PC-9 (cell line): ENCODE measurements at regions of chr14 and their contacts with region 1.

Region 1: DNA sequence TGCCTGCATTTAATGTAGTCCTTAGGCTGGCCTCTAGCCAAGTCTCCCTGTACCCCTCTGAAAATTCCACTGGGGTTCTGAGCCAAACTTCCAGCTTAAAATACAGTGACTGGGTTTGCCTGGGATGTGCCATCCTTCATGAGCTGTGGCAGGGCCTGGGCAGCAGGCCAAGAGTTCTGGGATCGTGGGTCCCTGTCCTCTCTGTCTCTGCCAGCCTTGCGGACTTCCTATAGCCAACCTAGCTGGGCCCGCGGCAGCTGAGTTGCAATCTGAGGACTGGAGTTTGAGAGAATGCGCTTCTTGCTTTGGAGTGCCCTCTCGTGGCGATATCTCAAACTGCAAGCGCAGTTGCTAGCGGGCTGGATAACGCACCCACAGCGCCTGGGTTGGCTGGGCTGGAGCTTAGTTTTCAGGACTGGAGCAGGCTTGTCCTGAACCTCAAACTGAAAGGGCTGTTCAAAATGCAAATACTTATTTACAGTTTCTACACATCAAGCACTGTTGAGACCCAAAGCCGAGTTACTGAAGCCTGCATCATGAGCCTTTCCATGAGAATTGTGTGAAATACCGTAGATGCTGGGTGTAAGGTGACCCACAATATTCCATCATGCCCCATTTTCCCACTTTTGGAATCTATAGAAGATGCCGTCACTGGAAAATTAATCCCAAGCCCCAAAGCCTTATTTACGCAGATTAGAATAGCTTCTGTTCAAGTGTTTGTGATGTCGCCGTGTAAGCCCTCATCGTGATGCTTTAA is 7.3 kb upstream of the IFI27L2 start:
- DNase-seq: peak in 1 of 2 experiments; percentile 44
- H3K4me3 ChIP-seq: no peak overlapping the region
- H3K27ac ChIP-seq: no peak overlapping the region
- H3K4me1 ChIP-seq: no peaks in the 10 kb centered on the region
- H3K27me3 ChIP-seq: no peaks in the 10 kb centered on the region
- CTCF ChIP-seq: peak; percentile 84

Region 2: DNA sequence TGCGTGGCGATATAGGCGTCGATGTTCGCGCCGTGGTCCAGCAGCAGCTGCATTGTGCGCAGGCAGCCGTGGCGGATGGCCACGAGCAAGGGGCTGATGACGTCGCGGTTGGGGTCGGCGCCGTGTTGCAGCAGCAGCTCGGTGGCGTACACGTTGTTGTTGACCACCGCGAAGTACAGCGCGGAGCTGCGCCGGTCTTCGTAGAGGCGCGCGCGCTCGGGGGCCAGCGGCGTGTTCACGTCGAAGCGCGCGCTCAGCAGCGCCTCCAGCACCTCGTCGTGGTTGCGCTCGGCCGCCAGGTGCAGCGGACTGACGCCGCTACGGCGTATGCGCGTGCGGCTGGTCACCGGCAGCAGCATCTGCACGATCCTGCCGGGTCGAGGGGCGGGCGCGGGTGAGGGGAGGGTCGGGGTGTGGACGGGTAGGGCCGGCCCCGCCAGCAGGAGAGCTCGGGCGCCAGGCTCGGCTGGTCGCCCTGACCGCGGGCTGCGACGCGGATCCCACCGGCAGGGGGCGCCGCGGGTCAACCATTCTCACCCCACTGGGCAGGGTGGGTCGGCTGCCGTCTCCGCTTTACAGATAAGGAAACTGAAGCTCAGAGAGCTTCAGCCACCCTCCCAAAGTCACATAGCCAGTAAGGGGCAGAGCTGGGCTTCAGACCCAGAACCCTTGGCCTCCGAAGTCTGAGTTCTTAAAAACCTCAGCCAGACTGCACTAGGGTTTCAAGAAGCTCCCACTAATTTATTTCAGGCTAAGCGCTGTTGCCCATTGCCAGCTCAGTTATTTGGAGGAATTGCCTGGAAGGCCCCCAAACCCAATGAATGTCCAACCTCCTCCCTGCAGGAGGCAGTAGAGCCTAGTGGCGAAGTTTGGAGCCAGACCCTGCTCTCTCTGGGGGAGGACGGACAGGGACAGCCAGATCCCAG is 197.2 kb before region 1 on chr14:
- CTCF ChIA-PET with region 1: no interaction called
- POLR2A ChIA-PET with region 1: no interaction called
- intact Hi-C with region 1: loop called (anchors 1 kb)
- DNase-seq: peak in 1 of 2 experiments; percentile 59
- H3K4me3 ChIP-seq: no peak overlapping the region
- H3K27ac ChIP-seq: no peak overlapping the region
- H3K4me1 ChIP-seq: peaks cover 39% of the 10 kb centered on the region
- H3K27me3 ChIP-seq: no peaks in the 10 kb centered on the region
- CTCF ChIP-seq: peak; percentile 76

Region 3: DNA sequence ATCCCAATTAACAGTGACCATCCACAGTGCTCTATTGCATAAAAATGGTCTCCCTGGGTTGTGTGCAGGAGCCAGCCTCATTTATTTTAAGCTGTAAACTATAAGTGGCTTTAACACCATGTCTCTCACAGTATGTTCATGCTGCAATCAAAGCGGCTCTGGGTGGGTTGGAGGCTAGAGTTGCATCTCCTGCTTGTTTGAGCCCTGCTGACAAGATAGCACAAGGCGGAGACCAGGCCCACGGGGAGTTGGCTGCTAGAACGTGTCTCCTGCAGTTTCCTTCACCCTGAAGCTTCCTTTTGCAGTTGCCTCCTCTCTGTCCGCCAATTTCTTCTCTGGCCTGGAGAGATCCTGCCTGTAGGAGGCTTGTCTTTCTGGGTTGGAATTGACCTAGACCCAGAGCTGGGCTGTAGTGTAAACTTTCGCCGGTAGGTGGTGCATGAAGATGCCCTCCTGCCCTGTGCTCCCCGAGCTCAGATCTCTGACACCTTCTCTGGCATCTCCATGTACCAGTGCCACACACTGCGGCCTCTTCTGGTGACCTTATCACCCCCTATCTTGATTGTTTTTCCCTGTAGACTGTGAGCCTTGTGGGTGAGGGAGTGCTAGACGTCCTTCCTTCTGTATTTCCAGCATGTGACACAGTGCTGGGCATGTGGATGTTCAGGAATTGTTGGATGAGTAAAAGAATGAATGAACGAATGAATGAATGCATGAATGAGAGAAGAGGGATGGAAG is 100.3 kb before region 1 on chr14:
- CTCF ChIA-PET with region 1: interaction called, 10 read pairs
- POLR2A ChIA-PET with region 1: interaction called, 5 read pairs
- intact Hi-C with region 1: loop called (anchors 2 kb)
- DNase-seq: peak in 1 of 2 experiments; percentile 32
- H3K4me3 ChIP-seq: no peak overlapping the region
- H3K27ac ChIP-seq: no peak overlapping the region
- H3K4me1 ChIP-seq: no peaks in the 10 kb centered on the region
- H3K27me3 ChIP-seq: no peaks in the 10 kb centered on the region
- CTCF ChIP-seq: peak; percentile 72

Region 4: GRCh38 chr14:94051115-94051514 is 85.6 kb before region 1 on chr14:
- CTCF ChIA-PET with region 1: no interaction called
- POLR2A ChIA-PET with region 1: no interaction called
- intact Hi-C with region 1: loop called (anchors 5 kb)
- DNase-seq: no peak
- H3K4me3 ChIP-seq: no peak overlapping the region
- H3K27ac ChIP-seq: no peak overlapping the region
- H3K4me1 ChIP-seq: no peaks in the 10 kb centered on the region
- H3K27me3 ChIP-seq: no peaks in the 10 kb centered on the region
- CTCF ChIP-seq: no peak

Region 5: GRCh38 chr14:94439453-94440057 is 302.8 kb after region 1 on chr14:
- CTCF ChIA-PET with region 1: no interaction called
- POLR2A ChIA-PET with region 1: no interaction called
- intact Hi-C with region 1: no loop called
- DNase-seq: no peak
- H3K4me3 ChIP-seq: no peak overlapping the region
- H3K27ac ChIP-seq: no peak overlapping the region
- H3K4me1 ChIP-seq: no peaks in the 10 kb centered on the region
- H3K27me3 ChIP-seq: no peaks in the 10 kb centered on the region
- CTCF ChIP-seq: no peak

Region 6: DNA sequence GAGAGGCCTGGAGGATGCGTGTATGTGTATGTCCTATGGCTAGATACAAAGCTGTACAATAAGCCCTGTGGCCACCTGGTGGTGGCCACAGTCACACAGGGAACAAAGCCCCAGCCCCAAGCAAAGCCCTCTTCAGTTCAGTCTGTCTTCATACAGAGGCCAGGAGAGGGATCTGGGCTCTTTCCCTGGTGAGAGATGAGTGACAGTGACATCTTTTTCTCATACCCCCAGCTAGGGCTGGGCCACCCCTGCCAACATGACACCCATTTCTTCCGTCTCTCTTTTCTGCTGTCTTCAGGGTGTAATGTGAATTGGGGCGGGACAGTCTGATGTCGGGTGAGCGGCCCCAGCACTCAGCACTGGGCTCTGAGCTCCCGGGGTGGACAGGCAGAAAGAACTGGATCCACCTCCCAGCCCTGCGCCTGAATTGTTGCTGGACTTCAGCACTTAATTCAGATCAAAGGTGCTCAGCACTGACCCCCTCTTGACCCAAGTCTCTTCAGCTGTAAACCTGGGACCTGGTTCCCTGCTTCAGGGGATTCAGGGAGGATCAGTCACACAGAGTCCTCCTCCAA is 535.2 kb after region 1 on chr14:
- CTCF ChIA-PET with region 1: no interaction called
- POLR2A ChIA-PET with region 1: no interaction called
- intact Hi-C with region 1: no loop called
- DNase-seq: no peak
- H3K4me3 ChIP-seq: no peak overlapping the region
- H3K27ac ChIP-seq: no peak overlapping the region
- H3K4me1 ChIP-seq: no peaks in the 10 kb centered on the region
- H3K27me3 ChIP-seq: peaks cover 30% of the 10 kb centered on the region
- CTCF ChIP-seq: peak; percentile 42